Endothelial cell of umbilical vein (primary cell): ENCODE measurements at regions of chr16 and their contacts with region 1.

Region 1: DNA sequence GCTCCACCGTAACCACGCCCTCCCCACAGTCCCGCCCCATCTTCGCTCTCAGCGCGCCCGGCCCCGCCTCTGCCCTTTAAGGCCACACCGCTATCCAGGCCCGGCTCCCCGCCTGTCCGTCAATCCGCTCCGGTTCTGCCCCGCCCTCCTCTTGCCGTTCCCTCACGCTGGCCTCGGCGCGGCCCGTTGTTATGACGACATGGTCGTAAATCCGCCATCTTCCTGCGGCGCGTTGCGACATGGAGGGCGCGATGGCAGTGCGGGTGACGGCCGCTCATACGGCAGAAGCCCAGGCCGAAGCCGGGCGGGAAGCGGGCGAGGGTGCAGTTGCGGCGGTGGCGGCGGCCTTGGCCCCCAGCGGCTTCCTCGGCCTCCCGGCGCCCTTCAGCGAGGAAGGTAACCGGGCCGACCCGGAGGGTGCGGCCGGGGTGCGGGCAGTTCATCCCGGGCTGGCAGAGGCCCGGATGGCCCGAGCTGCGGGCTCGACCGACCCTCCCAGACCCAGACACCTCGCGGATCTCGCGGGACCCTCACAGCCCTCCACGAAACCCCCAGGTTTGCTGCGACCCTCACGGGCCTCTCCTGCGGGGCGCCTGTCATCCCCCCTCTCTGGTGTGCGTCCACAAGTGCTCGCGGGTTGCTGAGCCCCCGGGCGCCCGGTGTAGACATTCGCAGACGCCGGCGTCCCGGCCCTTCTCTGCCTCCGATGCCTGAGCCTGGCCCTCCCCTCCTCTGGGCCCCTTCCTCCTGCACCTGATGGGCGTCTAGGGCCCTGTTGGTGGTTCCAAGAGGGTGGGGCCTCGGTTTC is at the start of gene E4F1:
- DNase-seq: peak; percentile 99
- H3K4me3 ChIP-seq: peak within 1 kb of the TSS; percentile 54 to 79 (median 74)
- H3K27ac ChIP-seq: peak within 1 kb of the TSS; percentile 41
- H3K4me1 ChIP-seq: peaks cover 7% of the 10 kb centered on the region
- H3K27me3 ChIP-seq: no peaks in the 10 kb centered on the region
- CTCF ChIP-seq: no peak
- POLR2A ChIP-seq: peak; percentile 96
- total RNA-seq, gene E4F1: 31.9 and 32.7 TPM in 2 replicates

Region 2: DNA sequence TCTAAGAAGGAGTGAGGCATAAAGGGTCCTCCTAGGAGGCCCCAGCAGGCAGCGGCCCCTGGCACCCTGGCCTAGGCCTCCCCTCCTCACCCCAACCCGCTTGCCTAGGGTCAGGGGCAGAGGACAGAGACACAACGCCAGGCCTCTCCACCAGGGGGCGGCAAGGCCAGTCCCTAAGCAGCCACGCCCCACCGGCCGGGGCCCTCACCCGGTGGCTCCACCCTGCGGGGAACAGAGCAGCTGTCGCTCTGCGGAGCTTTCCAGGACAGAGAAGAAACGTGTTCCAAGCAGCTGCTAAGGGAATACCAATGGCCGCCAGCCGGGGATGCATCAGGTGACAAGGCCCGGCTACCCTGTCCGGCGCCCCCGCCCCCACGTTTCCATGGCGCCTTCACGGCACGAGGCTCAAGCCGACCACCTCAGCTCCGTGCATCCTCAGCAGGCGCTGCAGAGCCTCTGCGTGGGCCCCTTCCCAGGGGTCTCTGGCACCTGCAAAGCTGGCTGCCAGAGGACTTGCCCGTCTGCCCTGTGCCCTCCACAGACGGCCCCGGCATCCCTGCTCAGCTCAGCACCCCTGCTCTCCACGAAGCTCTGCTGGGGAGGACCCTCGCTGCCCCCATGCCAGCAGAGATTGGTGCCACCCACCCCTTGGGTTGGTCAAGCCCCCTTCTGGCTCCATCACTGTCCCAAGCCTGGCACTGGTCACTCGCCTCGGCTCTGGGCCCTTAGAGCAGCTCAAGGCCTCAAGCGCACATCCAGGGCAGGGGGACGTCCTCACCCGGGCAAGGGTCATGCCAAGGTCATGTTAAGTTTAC is 219.5 kb before region 1 on chr16:
- CTCF ChIA-PET with region 1: no interaction called
- POLR2A ChIA-PET with region 1: no interaction called
- dilution Hi-C with region 1: no loop called
- intact Hi-C with region 1: no loop called
- DNase-seq: peak; percentile 73
- H3K4me3 ChIP-seq: no peak overlapping the region
- H3K27ac ChIP-seq: no peak overlapping the region
- H3K4me1 ChIP-seq: peaks cover 42% of the 10 kb centered on the region
- H3K27me3 ChIP-seq: no peaks in the 10 kb centered on the region
- CTCF ChIP-seq: peak; percentile 97 to 99
- POLR2A ChIP-seq: no peak

Region 3: DNA sequence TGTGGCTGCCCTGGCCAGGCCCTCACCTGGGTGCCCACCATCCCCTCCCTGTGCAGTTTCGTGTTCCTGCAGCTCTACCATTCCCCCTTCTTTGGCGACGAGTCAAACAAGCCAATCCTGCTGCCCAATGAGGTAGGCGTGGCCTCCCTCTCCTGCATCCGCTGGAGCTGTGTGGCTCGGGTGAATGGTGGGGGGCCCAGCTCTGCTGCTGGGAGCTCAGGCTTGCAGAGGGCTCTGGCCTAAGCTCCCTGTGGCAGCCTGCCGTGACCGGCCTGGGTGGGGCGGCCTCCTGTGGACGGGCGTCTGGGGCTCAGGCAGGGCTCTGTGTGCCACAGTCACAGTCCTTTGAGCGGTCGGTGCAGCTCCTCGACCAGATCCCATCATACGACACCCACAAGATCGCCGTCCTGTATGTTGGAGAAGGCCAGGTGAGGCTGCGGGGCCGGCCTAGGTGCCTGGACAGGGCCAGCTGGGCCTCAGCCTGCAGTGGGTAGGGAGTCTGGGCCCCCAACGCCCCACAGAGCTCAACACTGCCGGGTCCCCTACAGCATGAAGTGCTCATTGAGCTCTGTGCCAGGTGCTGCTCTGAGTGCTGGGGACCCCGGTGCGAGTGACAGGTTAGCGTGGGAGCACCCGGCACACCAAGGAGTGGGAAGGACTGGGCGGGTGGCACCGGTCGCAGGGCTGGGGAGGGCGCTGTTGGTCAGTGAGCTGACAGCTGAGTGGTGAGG is 138.5 kb before region 1 on chr16:
- CTCF ChIA-PET with region 1: no interaction called
- POLR2A ChIA-PET with region 1: no interaction called
- dilution Hi-C with region 1: no loop called
- intact Hi-C with region 1: no loop called
- DNase-seq: no peak
- H3K4me3 ChIP-seq: no peak overlapping the region
- H3K27ac ChIP-seq: no peak overlapping the region
- H3K4me1 ChIP-seq: no peaks in the 10 kb centered on the region
- H3K27me3 ChIP-seq: no peaks in the 10 kb centered on the region
- CTCF ChIP-seq: no peak
- POLR2A ChIP-seq: no peak

Region 4: GRCh38 chr16:2170080-2170479 is 53.5 kb before region 1 on chr16:
- CTCF ChIA-PET with region 1: no interaction called
- POLR2A ChIA-PET with region 1: no interaction called
- dilution Hi-C with region 1: no loop called
- intact Hi-C with region 1: loop called (anchors 2 kb)
- DNase-seq: peak; percentile 95
- H3K4me3 ChIP-seq: peak overlapping the region; percentile 40 to 71 (median 57)
- H3K27ac ChIP-seq: peak overlapping the region; percentile 99
- H3K4me1 ChIP-seq: peaks cover 24% of the 10 kb centered on the region
- H3K27me3 ChIP-seq: no peaks in the 10 kb centered on the region
- CTCF ChIP-seq: peak in 1 of 2 donors; percentile 2
- POLR2A ChIP-seq: peak; percentile 91

Region 5: DNA sequence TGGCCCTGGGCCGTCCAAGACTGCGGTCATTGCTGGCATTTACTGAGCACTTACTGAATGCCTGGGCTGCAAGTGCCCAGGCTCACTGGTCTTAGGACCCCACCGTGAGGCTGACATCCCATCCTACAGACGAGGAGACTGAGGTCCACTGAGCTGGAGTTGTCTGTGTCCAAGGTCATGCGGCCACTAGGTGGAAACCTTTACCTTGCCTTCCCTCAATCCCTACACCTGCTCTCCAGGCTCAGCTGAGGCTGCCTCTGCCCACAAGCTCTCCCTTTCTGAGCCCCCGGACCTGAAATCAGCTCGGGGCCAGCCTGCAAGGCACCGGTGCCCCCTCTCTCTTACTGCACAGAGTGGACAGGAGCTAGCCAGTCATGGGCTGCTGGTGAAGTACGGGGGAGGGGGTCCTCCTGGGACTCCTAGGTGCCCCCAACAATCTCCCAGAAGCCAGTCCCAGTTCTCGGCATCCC is 28.7 kb before region 1 on chr16:
- CTCF ChIA-PET with region 1: no interaction called
- POLR2A ChIA-PET with region 1: no interaction called
- dilution Hi-C with region 1: no loop called
- intact Hi-C with region 1: no loop called
- DNase-seq: peak; percentile 31
- H3K4me3 ChIP-seq: no peak overlapping the region
- H3K27ac ChIP-seq: no peak overlapping the region
- H3K4me1 ChIP-seq: no peaks in the 10 kb centered on the region
- H3K27me3 ChIP-seq: peaks cover 26 to 35% of the 10 kb centered on the region in 2 experiments
- CTCF ChIP-seq: peak; percentile 8 to 39
- POLR2A ChIP-seq: no peak

Region 6: GRCh38 chr16:2205104-2205966 is 18.2 kb before region 1 on chr16 and contains the start of gene MLST8:
- CTCF ChIA-PET with region 1: no interaction called
- POLR2A ChIA-PET with region 1: no interaction called
- dilution Hi-C with region 1: no loop called
- intact Hi-C with region 1: loop called (anchors 1 kb)
- DNase-seq: peak; percentile 87
- H3K4me3 ChIP-seq: peak within 1 kb of the TSS; percentile 58 to 91 (median 73)
- H3K27ac ChIP-seq: peak within 1 kb of the TSS; percentile 76
- H3K4me1 ChIP-seq: peaks cover 10% of the 10 kb centered on the region
- H3K27me3 ChIP-seq: peaks cover under 1 to 2% of the 10 kb centered on the region in 2 experiments
- CTCF ChIP-seq: peak in 1 of 2 donors; percentile 25
- POLR2A ChIP-seq: peak; percentile 89
- total RNA-seq, gene MLST8: 36.9 and 37.0 TPM in 2 replicates

Region 7: GRCh38 chr16:2267913-2268666 is 44.5 kb after region 1 on chr16 and contains the start of gene RNPS1:
- CTCF ChIA-PET with region 1: interaction called, 3 read pairs
- POLR2A ChIA-PET with region 1: no interaction called
- dilution Hi-C with region 1: no loop called
- intact Hi-C with region 1: loop called (anchors 2 kb)
- DNase-seq: peak; percentile 96
- H3K4me3 ChIP-seq: peak within 1 kb of the TSS; percentile 16 to 73 (median 44)
- H3K27ac ChIP-seq: peak within 1 kb of the TSS; percentile 78
- H3K4me1 ChIP-seq: peaks cover 9% of the 10 kb centered on the region
- H3K27me3 ChIP-seq: no peaks in the 10 kb centered on the region
- CTCF ChIP-seq: no peak
- POLR2A ChIP-seq: peak; percentile 85
- total RNA-seq, gene RNPS1: 204 and 209 TPM in 2 replicates

Region 8: GRCh38 chr16:2459647-2460390 is 236.2 kb after region 1 on chr16 and contains the start of gene TEDC2:
- CTCF ChIA-PET with region 1: no interaction called
- POLR2A ChIA-PET with region 1: no interaction called
- dilution Hi-C with region 1: no loop called
- intact Hi-C with region 1: loop called (anchors 1 kb)
- DNase-seq: peak; percentile 97
- H3K4me3 ChIP-seq: peak within 1 kb of the TSS; percentile 48 to 57 (median 50)
- H3K27ac ChIP-seq: no peak within 1 kb of the TSS
- H3K4me1 ChIP-seq: peaks cover 10% of the 10 kb centered on the region
- H3K27me3 ChIP-seq: no peaks in the 10 kb centered on the region
- CTCF ChIP-seq: no peak
- POLR2A ChIP-seq: no peak
- total RNA-seq, gene TEDC2: 12.7 and 15.2 TPM in 2 replicates